Activated naive CD4-positive, alpha-beta T cell treated with anti-CD3 and anti-CD28 coated beads, Interleukin-2, amount 10 ng/mL, durations not matched to agents 7 days and 5 days (primary cell): ENCODE measurements at regions of chr16 and their contacts with region 1.

Region 1: GRCh38 chr16:81737885-81738786 is 41.0 kb upstream of the PLCG2 start:
- DNase-seq: peak; percentile 92
- H3K4me3 Mint-ChIP-seq: peak overlapping the region; percentile 37
- H3K27ac Mint-ChIP-seq: no peak overlapping the region
- H3K4me1 Mint-ChIP-seq: peaks cover 21% of the 10 kb centered on the region
- H3K27me3 Mint-ChIP-seq: peaks cover 29% of the 10 kb centered on the region

Region 2: GRCh38 chr16:81366316-81366932 is 371.7 kb before region 1 on chr16:
- CTCF ChIA-PET with region 1: interaction called, 29 read pairs
- DNase-seq: no peak
- H3K4me3 Mint-ChIP-seq: no peak overlapping the region
- H3K27ac Mint-ChIP-seq: no peak overlapping the region
- H3K4me1 Mint-ChIP-seq: peaks cover 4% of the 10 kb centered on the region
- H3K27me3 Mint-ChIP-seq: no peaks in the 10 kb centered on the region

Region 3: DNA sequence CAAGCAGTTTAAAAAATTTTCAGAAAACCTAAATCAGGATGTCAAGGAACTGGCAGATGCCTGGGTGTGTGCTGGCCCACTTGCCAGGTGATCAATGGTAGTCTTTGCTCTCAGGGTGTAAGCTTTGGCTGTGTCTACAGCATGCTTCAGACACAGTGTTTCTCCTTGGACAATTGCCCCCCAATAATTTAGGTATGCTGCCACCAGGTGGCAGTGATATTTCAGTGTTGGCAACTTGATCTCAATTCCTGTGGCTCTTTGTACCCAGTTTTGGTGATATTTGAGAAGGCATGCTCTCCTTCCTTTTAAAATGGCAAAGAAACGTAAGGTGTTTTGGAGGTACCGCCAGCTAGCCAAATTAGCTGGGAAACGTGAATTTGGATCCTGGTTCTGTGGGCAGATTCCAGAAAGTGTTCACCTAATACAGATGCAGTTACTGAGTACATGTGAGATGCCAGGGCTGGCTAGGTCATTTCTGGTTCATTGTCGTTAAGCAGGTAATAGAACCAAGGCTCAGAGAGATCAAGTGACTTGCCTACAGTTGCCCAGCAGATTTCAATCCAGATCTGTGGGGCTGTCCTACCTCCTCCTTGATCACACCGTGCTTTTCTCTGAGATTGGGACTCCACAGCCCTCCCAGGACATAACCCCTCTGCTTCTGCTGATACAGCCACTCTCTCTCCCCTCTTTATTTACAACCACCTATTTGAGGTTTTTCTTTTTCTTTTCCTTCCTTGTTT is 114.6 kb before region 1 on chr16:
- CTCF ChIA-PET with region 1: interaction called, 15 read pairs
- DNase-seq: peak; percentile 72
- H3K4me3 Mint-ChIP-seq: no peak overlapping the region
- H3K27ac Mint-ChIP-seq: no peak overlapping the region
- H3K4me1 Mint-ChIP-seq: peaks cover 3% of the 10 kb centered on the region
- H3K27me3 Mint-ChIP-seq: no peaks in the 10 kb centered on the region